Ascending aorta (tissue), 2 donors: ENCODE measurements at regions of chr3 and their contacts with region 1.

Region 1: GRCh38 chr3:111803123-111803593 is 55.9 kb upstream of the PHLDB2 start:
- DNase-seq: peak; percentile 12 to 93
- H3K4me3 ChIP-seq: no peak overlapping the region
- H3K27ac ChIP-seq: peak overlapping the region; percentile 72 to 83
- H3K4me1 ChIP-seq: peaks cover 0 to 24% of the 10 kb centered on the region in 2 donors
- H3K27me3 ChIP-seq: no peaks in the 10 kb centered on the region
- CTCF ChIP-seq: no peak

Region 2: DNA sequence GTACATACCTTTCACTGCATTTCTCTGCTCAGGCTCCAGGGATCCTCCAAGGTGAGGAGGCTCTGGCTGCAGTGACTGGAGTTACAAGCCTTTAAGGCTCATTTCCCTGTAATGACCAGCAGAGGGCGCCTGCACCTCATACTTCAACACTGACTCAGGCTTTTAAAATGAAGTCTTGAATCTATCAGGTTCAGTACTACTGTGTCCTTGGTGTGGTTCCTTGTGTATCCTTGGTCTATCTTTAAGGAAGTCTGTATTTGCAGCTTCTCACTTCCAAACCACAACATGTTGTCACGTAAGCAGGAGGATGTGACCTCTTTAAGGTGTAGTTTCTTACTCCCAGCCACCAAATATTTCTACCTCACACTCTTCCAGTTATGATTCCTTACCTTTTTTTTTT is 85.6 kb before region 1 on chr3:
- intact Hi-C with region 1: loop called (anchors 5 kb)
- DNase-seq: peak in 1 of 2 donors; percentile 92
- H3K4me3 ChIP-seq: no peak overlapping the region
- H3K27ac ChIP-seq: no peak overlapping the region
- H3K4me1 ChIP-seq: peaks cover 3% of the 10 kb centered on the region in 2 donors
- H3K27me3 ChIP-seq: no peaks in the 10 kb centered on the region
- CTCF ChIP-seq: peak; percentile 89 to 95 (median 92)

Region 3: GRCh38 chr3:111737706-111738086 is 65.5 kb before region 1 on chr3:
- intact Hi-C with region 1: loop called (anchors 2 kb)
- DNase-seq: peak in 1 of 2 donors; percentile 88
- H3K4me3 ChIP-seq: no peak overlapping the region
- H3K27ac ChIP-seq: peak overlapping the region; percentile 65 to 66
- H3K4me1 ChIP-seq: peaks cover 8 to 23% of the 10 kb centered on the region in 2 donors
- H3K27me3 ChIP-seq: no peaks in the 10 kb centered on the region
- CTCF ChIP-seq: no peak

Region 4: GRCh38 chr3:111761309-111761831 is 41.8 kb before region 1 on chr3:
- intact Hi-C with region 1: loop called (anchors 5 kb)
- DNase-seq: no peak
- H3K4me3 ChIP-seq: no peak overlapping the region
- H3K27ac ChIP-seq: peak overlapping the region; percentile 72 to 78
- H3K4me1 ChIP-seq: peaks cover 8 to 30% of the 10 kb centered on the region in 2 donors
- H3K27me3 ChIP-seq: no peaks in the 10 kb centered on the region
- CTCF ChIP-seq: no peak